CD14-positive monocyte (primary cell): ENCODE measurements at regions of chr6 and their contacts with region 1.

Region 1: GRCh38 chr6:136643850-136644596 is 93.8 kb upstream of the MAP7 start:
- DNase-seq: peak; percentile 50 to 70 (median 65)
- H3K4me3 ChIP-seq: no peak overlapping the region
- H3K4me3 Mint-ChIP-seq: no peak overlapping the region
- H3K27ac ChIP-seq: peak overlapping the region in 1 of 2 donors; percentile 16
- H3K27ac Mint-ChIP-seq: peak overlapping the region in 1 of 7 donors; percentile 71
- H3K4me1 ChIP-seq: no peaks in the 10 kb centered on the region
- H3K4me1 Mint-ChIP-seq: no peaks in the 10 kb centered on the region
- H3K27me3 ChIP-seq: no peaks in the 10 kb centered on the region
- H3K27me3 Mint-ChIP-seq: no peaks in the 10 kb centered on the region
- CTCF ChIP-seq: peak; percentile 95

Region 2: GRCh38 chr6:136582711-136583471 is 61.1 kb before region 1 on chr6:
- intact Hi-C with region 1: loop called in 1 of 2 experiments (anchors 10 kb)
- DNase-seq: peak; percentile 67 to 88 (median 81)
- H3K4me3 ChIP-seq: no peak overlapping the region
- H3K4me3 Mint-ChIP-seq: no peak overlapping the region
- H3K27ac ChIP-seq: peak overlapping the region; percentile 65 to 90
- H3K27ac Mint-ChIP-seq: peak overlapping the region; percentile 91 to 97 (median 94)
- H3K4me1 ChIP-seq: peaks cover 0 to 3% of the 10 kb centered on the region in 2 donors
- H3K4me1 Mint-ChIP-seq: peaks cover 2% of the 10 kb centered on the region
- H3K27me3 ChIP-seq: no peaks in the 10 kb centered on the region
- H3K27me3 Mint-ChIP-seq: no peaks in the 10 kb centered on the region
- CTCF ChIP-seq: peak; percentile 78

Region 3: DNA sequence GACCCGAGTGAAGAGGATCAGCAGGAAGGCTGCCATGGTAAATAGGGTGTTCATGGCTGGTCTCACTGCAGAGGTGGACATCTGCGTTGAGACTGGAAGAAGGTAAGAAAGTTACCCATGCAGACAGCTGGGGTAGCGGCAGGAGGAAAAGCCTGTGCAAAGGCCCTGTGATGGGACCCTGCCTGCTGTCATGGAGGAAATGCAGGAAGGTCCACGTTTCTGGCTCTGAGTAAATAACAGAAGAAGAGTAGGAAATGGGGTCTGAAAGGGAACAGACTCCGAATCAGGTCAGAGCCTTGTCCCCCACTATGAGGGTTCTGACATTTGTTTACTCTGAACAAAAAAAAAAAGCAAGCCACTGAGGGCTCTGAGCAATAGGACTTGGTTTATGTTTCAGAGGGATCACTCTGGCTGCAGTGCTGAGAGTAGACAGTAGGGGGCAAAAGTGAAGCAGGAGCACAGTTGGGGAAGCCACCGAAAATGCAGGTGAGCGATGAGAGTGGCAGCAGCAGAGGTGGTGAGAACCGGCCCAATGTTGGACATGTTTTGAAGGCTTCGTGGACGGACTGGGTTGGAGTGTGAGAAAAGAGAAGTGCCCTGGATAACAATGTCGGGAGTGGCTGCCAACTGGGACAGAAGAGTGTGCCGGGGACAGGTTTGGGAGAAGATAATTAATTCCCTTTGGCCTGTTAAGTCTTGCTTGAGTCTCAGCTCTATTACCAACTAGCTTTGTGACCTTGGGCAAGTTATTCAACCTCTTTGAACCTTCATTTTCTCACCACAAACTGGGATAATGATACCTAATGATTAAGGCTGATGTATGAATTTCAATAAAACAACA is 35.9 kb before region 1 on chr6:
- intact Hi-C with region 1: no loop called
- DNase-seq: peak; percentile 42 to 67 (median 54)
- H3K4me3 ChIP-seq: no peak overlapping the region
- H3K4me3 Mint-ChIP-seq: no peak overlapping the region
- H3K27ac ChIP-seq: no peak overlapping the region
- H3K27ac Mint-ChIP-seq: peak overlapping the region in 5 of 7 donors; percentile 32 to 91 (median 55)
- H3K4me1 ChIP-seq: peaks cover 19 to 25% of the 10 kb centered on the region in 2 donors
- H3K4me1 Mint-ChIP-seq: peaks cover 29% of the 10 kb centered on the region
- H3K27me3 ChIP-seq: no peaks in the 10 kb centered on the region
- H3K27me3 Mint-ChIP-seq: peaks cover 0 to 2% (median 0%) of the 10 kb centered on the region in 3 donors
- CTCF ChIP-seq: peak; percentile 89